ENCODE measurements at regions of chr1 and their contacts with region 1.

Region 1: GRCh38 chr1:231211005-231211857 is 29.8 kb upstream of the GNPAT start:
- DNase-seq: peak; percentile 19 to 72
- ATAC-seq: peak; percentile 78 to 92
- H3K4me3 ChIP-seq: peak overlapping the region; percentile 38 to 71 (median 51)
- H3K27ac ChIP-seq: no peak overlapping the region
- H3K4me1 ChIP-seq: no peaks in the 10 kb centered on the region
- H3K27me3 ChIP-seq: peaks cover 0 to 4% (median 0%) of the 10 kb centered on the region in 3 donors
- CTCF ChIP-seq: peak; percentile 76 to 90 (median 88)
- POLR2A ChIP-seq: no peak

Region 2: DNA sequence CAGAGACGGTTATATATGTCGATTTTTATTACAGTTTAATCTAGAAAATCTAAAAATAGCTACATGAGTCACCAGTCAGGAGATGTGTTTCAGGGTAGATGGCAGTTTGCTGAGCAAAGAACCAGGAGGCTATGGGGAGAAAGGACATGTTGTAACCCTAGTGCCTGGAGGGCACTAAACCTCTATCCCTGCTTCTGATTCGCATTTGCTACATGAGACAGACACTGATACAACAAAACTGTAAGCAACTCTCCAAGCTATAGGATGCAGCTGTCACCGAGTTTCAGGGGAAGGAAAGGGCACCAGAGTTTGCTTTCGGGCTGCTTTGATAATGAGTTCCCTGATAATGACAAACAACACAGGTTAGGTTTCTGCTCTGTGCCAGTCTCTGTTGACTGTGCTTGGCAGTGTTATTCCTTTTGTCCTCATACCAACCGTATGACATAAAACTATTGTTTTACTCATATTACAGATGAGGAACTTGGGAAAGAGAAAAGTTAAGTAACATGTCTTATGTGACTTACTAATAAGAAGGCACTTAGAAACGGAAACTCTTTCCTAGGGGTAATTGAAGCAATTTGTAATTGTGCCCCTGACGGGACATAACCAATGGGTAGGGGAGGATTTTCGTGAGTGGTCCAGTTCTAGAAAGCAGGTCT is 386.0 kb before region 1 on chr1:
- in situ Hi-C with region 1: loop called in 1 of 4 experiments (anchors 25 kb)
- intact Hi-C with region 1: no loop called
- DNase-seq: peak; percentile 51 to 75
- ATAC-seq: peak; percentile 86 to 88
- H3K4me3 ChIP-seq: peak overlapping the region in 2 of 4 donors; percentile 1 to 36
- H3K27ac ChIP-seq: peak overlapping the region; percentile 91 to 94 (median 93)
- H3K4me1 ChIP-seq: peaks cover 60 to 66% of the 10 kb centered on the region in 2 donors
- H3K27me3 ChIP-seq: no peaks in the 10 kb centered on the region
- CTCF ChIP-seq: no peak
- POLR2A ChIP-seq: peak in 1 of 2 donors; percentile 20

Region 3: DNA sequence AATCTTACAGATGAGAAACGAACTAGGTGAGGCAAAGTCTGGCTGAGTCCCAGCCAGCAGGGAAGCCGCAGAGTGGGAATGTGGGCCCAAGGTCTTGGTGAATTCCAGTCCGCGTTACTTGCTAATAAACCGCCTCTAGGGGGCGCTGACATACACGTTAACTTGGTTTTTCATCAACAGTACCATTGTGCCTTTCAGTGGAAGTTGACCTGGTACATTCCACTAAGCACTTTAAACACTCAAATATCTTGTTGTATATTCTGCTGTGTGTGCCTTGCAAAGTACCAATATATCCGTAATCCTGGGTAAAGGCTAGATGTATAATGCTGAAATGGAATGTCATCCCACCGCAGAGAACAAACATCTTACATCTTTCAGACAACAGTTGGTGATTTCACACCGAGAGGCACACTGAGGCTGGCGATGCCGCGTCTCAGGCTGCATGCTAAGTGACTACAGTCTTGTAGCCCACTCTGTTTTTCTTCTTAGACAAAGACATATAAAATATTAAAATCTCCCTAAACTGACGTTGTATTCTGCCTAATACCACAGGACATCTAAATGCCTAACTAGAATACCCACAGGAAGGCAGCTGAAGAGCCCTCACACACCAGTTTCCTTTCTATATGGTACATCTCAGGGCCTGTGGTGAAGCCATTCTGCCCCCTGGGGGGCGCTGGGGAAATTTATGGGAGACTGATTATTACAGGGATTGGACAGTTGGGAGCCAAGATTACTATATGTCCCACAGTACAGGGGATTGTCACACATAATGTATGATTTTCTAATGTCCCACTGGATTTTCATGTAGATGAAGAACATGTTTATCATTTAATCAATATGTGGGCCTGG is 293.7 kb before region 1 on chr1:
- in situ Hi-C with region 1: loop called in 3 of 4 experiments (anchors 10 to 25 kb)
- intact Hi-C with region 1: loop called (anchors 1 kb)
- DNase-seq: peak; percentile 19 to 48
- ATAC-seq: peak; percentile 70 to 81
- H3K4me3 ChIP-seq: no peak overlapping the region
- H3K27ac ChIP-seq: no peak overlapping the region
- H3K4me1 ChIP-seq: no peaks in the 10 kb centered on the region
- H3K27me3 ChIP-seq: no peaks in the 10 kb centered on the region
- CTCF ChIP-seq: peak; percentile 42 to 63 (median 51)
- POLR2A ChIP-seq: no peak

Region 4: GRCh38 chr1:230940848-230941247 is 270.4 kb before region 1 on chr1:
- in situ Hi-C with region 1: loop called in 1 of 4 experiments (anchors 25 kb)
- intact Hi-C with region 1: no loop called
- DNase-seq: no peak
- ATAC-seq: peak in 1 of 2 donors; percentile 58
- H3K4me3 ChIP-seq: no peak overlapping the region
- H3K27ac ChIP-seq: no peak overlapping the region
- H3K4me1 ChIP-seq: peaks cover 0 to 14% of the 10 kb centered on the region in 2 donors
- H3K27me3 ChIP-seq: no peaks in the 10 kb centered on the region
- CTCF ChIP-seq: no peak
- POLR2A ChIP-seq: no peak

Region 5: GRCh38 chr1:230978491-230979388 is 232.5 kb before region 1 on chr1 and contains the starts of genes ARV1 and TTC13:
- in situ Hi-C with region 1: loop called in 1 of 4 experiments (anchors 25 kb)
- intact Hi-C with region 1: loop called (anchors 2 kb)
- DNase-seq: peak; percentile 98
- ATAC-seq: peak; percentile 96 to 97
- H3K4me3 ChIP-seq: peak within 1 kb of the TSS; percentile 84 to 96 (median 88)
- H3K27ac ChIP-seq: peak within 1 kb of the TSS; percentile 71 to 82 (median 78)
- H3K4me1 ChIP-seq: peaks cover 17 to 24% of the 10 kb centered on the region in 2 donors
- H3K27me3 ChIP-seq: no peaks in the 10 kb centered on the region
- CTCF ChIP-seq: peak in 4 of 5 experiments; percentile 8 to 29 (median 23)
- POLR2A ChIP-seq: peak; percentile 48 to 56
- total RNA-seq, gene ARV1: 7.9 to 21.3 (median 10.5) TPM
- total RNA-seq, gene TTC13: 16.0 to 36.0 (median 22.7) TPM

Region 6: GRCh38 chr1:231084353-231084752 is 126.9 kb before region 1 on chr1:
- in situ Hi-C with region 1: no loop called
- intact Hi-C with region 1: no loop called
- DNase-seq: no peak
- ATAC-seq: no peak
- H3K4me3 ChIP-seq: no peak overlapping the region
- H3K27ac ChIP-seq: no peak overlapping the region
- H3K4me1 ChIP-seq: no peaks in the 10 kb centered on the region
- H3K27me3 ChIP-seq: no peaks in the 10 kb centered on the region
- CTCF ChIP-seq: no peak
- POLR2A ChIP-seq: no peak

Region 7: DNA sequence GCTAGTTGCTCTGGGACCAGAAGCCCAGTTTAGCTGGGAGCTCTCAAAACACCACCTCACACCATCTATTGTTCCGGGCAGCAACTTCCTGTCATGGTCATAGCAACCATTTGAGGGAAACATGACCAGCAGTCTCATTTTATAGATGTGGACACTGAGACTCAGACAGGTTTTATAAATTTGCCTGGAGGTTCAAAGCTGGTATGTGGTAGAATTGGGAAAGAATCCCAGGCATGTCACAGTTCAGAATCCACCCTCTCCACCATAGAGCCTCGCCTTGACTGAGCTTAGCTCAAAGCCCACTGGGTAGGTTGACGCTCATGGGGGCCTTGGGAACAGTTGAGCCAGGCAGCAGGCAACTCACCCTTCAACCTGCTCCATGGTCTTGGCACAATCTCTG is 63.3 kb before region 1 on chr1:
- in situ Hi-C with region 1: no loop called
- intact Hi-C with region 1: no loop called
- DNase-seq: no peak
- ATAC-seq: no peak
- H3K4me3 ChIP-seq: no peak overlapping the region
- H3K27ac ChIP-seq: no peak overlapping the region
- H3K4me1 ChIP-seq: no peaks in the 10 kb centered on the region
- H3K27me3 ChIP-seq: no peaks in the 10 kb centered on the region
- CTCF ChIP-seq: no peak
- POLR2A ChIP-seq: no peak

Region 8: DNA sequence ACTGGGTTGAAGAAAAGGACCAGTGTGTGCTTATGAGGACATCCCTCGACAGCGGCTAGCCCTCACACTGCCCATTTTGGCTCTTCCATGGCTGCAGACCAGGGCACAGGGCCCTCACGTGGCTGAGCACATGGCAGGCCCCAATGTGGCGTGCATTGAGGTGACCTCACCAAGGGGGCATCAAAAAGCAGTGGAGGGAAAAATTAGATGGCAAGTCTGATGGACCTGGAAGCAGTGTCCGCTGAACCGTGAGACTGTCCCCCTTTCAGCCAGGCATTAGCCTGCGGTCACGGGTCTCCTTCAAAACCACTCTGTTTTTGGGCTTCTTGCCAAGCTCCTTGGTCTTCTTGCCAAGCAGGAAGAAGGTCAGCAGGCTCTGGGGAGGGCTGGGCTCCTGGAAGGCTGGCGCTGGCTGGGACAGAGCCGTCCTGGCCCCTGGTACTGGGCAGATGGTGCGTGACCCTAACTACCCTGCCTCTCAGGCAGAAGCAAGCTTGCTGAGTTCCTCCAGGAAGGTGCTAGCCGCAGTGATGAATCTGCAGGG is 18.5 kb before region 1 on chr1:
- in situ Hi-C with region 1: no loop called
- intact Hi-C with region 1: no loop called
- DNase-seq: peak in 1 of 2 donors; percentile 24
- ATAC-seq: peak; percentile 39 to 56
- H3K4me3 ChIP-seq: no peak overlapping the region
- H3K27ac ChIP-seq: no peak overlapping the region
- H3K4me1 ChIP-seq: peaks cover 7% of the 10 kb centered on the region in 2 donors
- H3K27me3 ChIP-seq: peaks cover 0 to 3% (median 0%) of the 10 kb centered on the region in 3 donors
- CTCF ChIP-seq: no peak
- POLR2A ChIP-seq: no peak

Region 9: DNA sequence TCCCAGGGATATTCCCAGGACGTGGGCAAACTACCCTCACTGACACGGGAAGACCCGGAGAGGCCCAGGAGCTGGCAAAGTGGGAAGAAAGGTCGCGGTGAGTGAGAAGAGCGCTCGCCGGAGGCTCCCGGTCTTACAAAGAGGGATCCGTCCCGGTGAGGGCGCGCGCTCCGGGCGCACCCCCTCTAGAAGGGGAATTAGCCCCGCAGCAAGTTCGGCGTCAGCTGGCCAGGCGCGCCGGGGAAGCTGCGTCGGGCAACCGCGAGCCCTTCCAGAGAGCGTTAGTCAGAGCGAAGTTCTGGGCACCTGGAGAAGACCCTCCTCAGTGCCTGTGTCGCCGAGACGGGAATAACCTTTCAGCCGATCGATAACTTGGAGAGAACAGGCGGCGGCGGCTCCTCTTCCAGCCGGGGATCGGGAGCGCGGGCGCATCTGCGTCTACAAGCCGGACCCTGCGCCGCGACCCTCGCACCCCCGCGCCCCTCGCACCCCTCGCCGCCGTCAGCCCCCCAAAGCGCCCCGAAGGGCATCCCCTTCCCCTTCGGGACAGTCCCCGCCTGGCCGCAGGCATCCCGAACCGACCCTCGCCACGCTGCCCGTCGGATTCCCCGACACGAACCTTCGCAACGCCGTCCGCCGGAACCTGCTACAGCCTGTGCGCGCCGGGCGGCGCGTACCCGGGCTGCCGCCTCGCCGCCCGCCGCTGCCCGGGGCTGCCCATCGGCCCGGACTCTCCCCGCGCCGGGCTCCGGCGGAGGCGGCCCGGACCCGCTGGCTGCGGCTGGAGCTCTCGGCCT is 1418.2 kb after region 1 on chr1:
- in situ Hi-C with region 1: no loop called
- intact Hi-C with region 1: no loop called
- DNase-seq: peak; percentile 5 to 17
- ATAC-seq: peak; percentile 11 to 50
- H3K4me3 ChIP-seq: peak overlapping the region; percentile 79 to 84 (median 82)
- H3K27ac ChIP-seq: peak overlapping the region; percentile 33 to 93 (median 70)
- H3K4me1 ChIP-seq: peaks cover 9 to 12% of the 10 kb centered on the region in 2 donors
- H3K27me3 ChIP-seq: no peaks in the 10 kb centered on the region
- CTCF ChIP-seq: no peak
- POLR2A ChIP-seq: no peak

Measured in gastrocnemius medialis (tissue), 4 donors.